GM13976 (cell line): ENCODE measurements at regions of chr17 and their contacts with region 1.

Region 1: DNA sequence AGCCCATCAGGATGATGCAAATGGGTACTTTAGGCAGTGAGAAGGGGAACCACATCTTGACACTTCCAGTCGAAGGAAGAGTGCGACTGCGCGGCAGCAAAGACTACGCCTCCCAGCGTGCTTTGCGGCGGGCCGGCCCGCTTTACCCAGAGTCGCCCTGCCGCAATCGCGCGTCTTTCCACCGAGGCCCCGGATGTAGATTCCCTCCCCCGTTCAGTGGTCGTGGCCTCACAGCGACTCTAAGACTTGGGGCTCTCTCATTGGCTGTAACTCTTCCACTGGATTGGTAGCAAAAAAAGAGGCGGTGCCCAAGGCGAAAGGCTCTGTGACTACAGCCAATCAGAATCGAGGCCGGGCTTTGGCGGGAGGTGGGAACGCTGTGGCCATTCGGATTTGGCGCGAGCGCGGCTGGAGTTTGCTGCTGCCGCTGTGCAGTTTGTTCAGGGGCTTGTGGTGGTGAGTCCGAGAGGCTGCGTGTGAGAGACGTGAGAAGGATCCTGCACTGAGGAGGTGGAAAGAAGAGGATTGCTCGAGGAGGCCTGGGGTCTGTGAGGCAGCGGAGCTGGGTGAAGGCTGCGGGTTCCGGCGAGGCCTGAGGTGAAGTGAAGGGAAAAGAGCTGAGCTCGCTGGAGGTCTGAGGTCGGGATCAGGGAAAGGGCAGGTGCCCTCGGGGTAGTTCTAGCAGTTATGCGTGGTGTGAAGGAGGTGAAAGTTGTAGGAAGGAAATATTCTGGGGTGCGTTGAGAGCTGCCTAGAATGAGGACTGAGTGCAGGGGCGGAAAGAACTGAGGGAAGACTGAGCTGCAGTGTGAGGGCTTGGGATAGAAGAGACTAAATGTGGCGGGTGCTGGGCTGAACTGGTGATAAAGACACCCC is at the start of gene CDC6:
- DNase-seq: peak; percentile 98
- CTCF ChIP-seq: no peak

Region 2: DNA sequence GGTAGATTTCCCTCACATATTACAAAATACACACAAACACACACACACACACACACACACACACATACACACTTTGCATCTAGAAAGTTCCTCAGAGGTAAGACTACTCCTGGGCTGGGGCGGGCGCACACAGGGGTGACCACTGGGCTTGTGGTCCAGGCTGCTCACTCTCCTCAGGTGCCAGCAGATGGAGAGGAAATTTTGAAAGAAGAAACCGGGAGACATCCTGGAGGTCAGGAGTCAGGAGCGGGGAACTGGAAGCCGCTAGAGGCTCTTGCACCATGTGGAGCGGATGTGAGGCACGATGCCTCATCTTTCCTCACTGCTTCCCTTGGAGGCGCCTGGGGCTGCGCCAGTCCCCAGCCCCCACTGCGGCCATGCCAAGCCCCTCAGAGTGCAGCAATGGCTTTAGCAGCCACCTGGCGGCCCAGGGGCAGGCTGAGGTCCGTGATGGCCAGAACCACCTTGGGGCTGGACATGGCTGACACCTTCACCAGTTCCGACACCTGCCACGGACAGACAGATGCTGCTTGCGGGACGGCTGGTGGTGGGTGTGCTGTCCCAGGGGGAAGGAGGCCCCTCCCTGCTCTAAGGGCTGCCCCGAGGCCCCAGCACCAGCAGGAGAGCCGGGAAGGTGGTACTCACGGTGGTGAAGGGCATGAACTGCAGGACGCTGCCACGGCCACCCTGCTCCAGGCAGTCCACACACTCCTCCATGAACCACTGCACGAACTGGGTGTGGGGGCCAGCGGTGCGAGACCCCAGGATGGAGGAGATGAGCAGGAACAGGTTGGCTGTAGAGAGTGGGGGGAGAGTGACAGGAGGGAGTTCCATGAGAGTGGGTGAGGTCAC is 268.4 kb before region 1 on chr17:
- in situ Hi-C with region 1: loop called (anchors 10 kb)
- DNase-seq: no peak
- CTCF ChIP-seq: no peak

Region 3: DNA sequence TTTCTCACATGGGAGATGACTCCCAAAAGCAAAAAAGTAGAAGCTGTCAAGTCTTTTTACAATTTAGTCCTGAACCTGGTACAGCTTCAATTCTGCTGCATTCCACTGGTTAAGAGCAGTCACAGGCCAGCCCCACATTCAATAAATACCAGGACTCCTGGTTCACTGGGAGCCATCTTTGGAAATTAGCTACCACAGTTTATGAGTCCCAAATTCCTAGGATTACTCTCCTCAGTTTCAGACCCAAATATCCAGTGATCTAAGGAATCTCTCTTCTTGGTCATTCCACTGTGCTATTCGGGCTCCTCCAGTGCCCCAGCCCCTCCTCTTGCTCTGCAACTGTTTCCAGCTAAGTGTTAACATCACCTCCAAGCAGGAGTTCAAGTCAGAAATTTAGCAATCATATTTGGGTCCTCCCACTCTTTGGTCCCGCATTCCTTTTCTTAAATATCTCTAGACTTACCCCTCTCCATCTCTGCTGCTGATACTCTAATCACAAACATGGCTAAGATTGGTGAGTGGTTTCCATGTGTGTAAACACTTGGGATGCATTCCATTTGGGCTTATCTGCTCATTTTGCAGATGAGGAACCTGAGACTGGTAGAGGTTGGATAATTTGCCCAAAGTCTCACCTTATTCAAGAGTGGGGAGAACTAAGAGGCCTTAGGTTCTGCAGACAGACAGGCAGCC is 78.2 kb before region 1 on chr17:
- in situ Hi-C with region 1: loop called (anchors 10 kb)
- DNase-seq: no peak
- CTCF ChIP-seq: no peak

Region 4: GRCh38 chr17:40461732-40462342 is 174.1 kb after region 1 on chr17:
- in situ Hi-C with region 1: no loop called
- DNase-seq: no peak
- CTCF ChIP-seq: no peak

Region 5: DNA sequence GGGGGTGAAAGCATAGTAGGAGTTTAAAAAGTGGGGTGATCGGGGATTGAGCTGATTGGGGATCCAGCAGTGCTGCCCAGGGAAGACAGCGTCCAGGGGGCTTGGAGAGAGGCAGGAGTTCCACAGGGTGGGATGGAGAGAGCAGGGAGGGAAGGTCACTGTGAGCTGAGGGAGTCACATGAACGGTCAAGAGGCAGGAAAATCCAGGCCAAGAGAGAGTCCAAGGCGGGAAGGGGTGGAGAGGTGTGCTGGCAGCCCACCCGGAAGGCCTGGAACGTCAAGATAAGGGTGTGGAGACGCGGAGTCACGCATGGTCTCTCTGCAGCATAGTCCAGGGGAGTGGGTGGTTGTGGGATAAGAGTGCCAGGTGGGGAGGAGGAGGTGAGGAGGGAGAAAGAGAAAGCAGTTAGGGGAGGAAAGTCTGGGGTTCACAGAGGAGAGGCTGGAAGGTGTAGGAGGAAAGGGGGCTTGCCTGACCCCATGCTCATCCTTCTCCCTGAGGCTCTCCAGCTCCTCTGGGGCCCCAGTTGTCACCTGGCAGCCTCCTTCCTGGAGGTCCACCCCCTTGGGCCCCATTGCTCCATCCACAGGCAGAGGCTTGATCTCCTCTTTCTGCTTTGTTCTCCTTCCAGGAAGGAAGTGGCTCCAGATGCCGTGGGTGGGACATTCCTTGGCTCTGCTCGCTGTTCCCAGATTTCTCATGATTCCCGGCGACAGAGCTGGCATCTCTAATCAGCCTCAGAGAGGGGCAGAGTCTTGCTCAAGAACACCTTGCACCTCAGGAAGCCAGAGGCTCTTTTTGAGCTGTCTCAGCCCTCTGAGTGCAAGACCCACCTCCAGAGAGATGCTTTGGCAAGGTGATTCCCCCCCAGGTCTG is 248.8 kb after region 1 on chr17:
- in situ Hi-C with region 1: loop called (anchors 10 kb)
- DNase-seq: no peak
- CTCF ChIP-seq: no peak